ENCODE measurements at regions of chr2 and their contacts with region 1.

Region 1: DNA sequence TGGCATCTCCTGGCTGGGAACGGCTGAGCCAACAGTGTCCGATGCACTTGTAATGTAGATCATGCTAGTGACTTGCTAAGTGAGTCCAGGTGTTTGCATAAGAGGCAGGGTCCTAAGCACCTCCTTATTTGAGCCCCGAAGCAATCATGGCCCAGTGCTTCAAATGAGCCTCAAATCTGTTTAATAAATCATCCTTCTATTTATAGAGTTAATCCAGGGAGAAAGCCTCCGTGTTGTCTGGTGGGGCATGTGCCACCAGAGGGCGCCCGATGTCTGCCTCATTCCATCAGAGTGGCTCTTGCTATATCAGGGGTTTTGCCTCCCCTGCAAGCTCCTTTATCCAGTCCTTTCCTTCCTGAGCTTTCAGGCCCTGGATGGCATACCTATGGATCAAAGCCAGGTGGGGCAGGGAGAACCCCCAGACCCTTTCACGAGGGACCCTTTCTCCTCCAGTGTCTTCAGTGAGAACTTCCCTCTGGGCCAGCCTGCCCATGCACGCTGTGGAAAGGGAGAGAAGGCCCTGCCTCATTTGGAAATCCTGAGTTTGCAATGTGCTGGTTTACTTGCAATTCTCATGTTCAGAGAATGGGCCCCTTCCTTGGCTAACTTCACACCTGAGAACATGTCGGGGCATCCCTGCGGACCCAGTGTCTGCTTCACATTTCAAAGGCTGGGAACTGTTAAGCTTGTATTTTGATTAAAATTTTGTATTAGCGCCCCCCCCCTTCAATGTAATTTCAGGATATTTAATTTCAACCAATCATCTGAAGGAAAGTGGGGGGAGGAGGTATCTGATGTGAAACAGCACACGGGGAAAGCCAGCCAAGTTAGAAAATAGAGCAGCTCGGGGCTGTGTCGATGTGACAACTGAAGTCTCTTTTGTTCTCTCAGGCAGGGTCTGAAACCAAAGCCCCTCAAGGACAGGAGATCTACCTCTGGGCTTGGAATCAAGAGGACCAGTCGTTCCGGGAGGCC is 39.7 kb downstream of the RDH14 start:
- DNase-seq: peak; percentile 86
- ATAC-seq: peak; percentile 83 to 84

Region 2: GRCh38 chr2:18435421-18436037 is 85.2 kb before region 1 on chr2:
- intact Hi-C with region 1: loop called in 1 of 2 experiments (anchors 5 kb)
- DNase-seq: no peak
- ATAC-seq: peak; percentile 44 to 46

Region 3: GRCh38 chr2:18741895-18742732 is 221.4 kb after region 1 on chr2:
- intact Hi-C with region 1: loop called in 1 of 2 experiments (anchors 5 kb)
- DNase-seq: peak; percentile 45
- ATAC-seq: peak; percentile 65 to 93